ENCODE measurements at regions of chr6 and their contacts with region 1.

Region 1: DNA sequence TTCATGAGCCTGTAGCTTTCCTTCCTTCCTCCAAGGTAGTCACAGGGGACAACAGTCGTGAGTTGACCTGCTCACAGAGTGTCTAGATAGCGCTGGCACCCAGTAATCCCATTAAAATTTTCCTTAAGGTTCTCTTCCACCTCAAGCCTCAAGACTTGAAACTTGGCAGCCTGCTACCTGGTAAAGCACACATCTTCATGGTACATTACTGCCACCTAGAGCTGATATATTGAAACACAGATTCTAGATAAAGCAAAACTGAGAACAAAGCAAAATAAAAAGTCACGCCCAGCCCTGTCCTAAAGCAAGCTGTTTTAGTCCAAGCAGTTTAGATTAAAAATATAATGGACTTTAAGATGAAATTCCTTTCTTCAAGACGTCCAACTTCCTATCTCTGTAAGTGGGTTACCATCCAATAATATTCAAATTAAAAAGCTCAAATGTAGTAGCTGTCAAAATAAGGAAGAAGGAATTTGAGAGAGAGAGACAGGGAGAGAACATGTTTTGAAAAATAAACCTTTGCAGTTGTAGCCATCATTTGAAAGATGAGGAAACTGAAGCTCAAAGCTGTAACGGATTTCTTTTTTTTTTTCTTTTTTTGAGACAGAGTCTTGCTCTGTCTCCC is 50.7 kb upstream of the CD83 start:
- DNase-seq: peak; percentile 54 to 65
- ATAC-seq: peak; percentile 74 to 83
- H3K4me3 ChIP-seq: no peak overlapping the region
- H3K27ac ChIP-seq: no peak overlapping the region
- H3K4me1 ChIP-seq: no peaks in the 10 kb centered on the region
- CTCF ChIP-seq: peak; percentile 70
- EP300 ChIP-seq: no peak
- POLR2A ChIP-seq: no peak
- RAD21 ChIP-seq: peak; percentile 78 to 81

Region 2: DNA sequence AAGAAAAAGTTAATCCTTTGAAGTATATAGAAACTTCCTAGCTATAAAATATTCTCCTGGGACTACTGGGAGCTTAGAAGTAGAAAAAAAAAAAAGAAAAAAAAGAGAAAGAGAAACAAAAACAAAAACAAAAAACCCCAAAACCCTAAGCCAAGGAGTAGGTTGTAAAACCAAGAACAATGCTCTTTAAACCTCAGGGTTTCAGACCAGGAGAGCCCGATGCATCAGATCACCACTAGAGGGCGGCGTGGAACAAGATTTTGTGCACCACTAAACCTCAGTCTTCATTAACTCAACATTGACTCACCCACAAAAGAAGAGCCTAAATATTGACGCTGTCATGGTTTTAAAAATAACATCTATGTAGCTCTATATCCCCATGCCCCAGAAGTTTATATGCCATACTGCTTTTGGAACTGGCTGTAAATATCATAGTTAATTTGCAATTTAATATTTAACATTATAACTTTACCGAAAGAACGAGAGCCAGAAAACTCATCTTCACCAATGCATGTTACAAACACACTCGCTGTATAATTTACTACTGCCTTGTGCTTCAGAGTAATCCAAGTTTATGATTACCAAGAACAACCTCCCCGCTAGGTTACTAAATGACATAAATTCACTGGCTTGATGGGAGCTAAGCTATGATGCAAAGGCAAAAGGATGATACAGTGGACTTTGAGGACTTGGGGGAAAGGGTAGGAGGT is 271.7 kb before region 1 on chr6:
- CTCF ChIA-PET with region 1: interaction called, 13 read pairs
- POLR2A ChIA-PET with region 1: no interaction called
- DNase-seq: peak; percentile 23 to 72
- ATAC-seq: peak; percentile 88 to 90
- H3K4me3 ChIP-seq: no peak overlapping the region
- H3K27ac ChIP-seq: no peak overlapping the region
- H3K4me1 ChIP-seq: peaks cover 11% of the 10 kb centered on the region; the same call in 2 of the 3 replicates
- CTCF ChIP-seq: peak; percentile 78
- EP300 ChIP-seq: no peak
- POLR2A ChIP-seq: no peak
- RAD21 ChIP-seq: peak; percentile 69 to 74

Region 3: GRCh38 chr6:13903364-13903763 is 163.5 kb before region 1 on chr6:
- CTCF ChIA-PET with region 1: interaction called, 186 read pairs
- POLR2A ChIA-PET with region 1: interaction called, 4 read pairs
- DNase-seq: no peak
- ATAC-seq: no peak
- H3K4me3 ChIP-seq: no peak overlapping the region
- H3K27ac ChIP-seq: no peak overlapping the region
- H3K4me1 ChIP-seq: no peaks in the 10 kb centered on the region
- CTCF ChIP-seq: no peak
- EP300 ChIP-seq: no peak
- POLR2A ChIP-seq: no peak
- RAD21 ChIP-seq: no peak

Region 4: GRCh38 chr6:14046476-14047068 is 20.3 kb before region 1 on chr6:
- CTCF ChIA-PET with region 1: interaction called, 17 read pairs
- POLR2A ChIA-PET with region 1: no interaction called
- DNase-seq: peak; percentile 54 to 60
- ATAC-seq: peak; percentile 84 to 85; a peak in 5 of 6 replicates
- H3K4me3 ChIP-seq: no peak overlapping the region
- H3K27ac ChIP-seq: no peak overlapping the region
- H3K4me1 ChIP-seq: no peaks in the 10 kb centered on the region
- CTCF ChIP-seq: peak; percentile 54
- EP300 ChIP-seq: no peak
- POLR2A ChIP-seq: no peak
- RAD21 ChIP-seq: peak; percentile 56 to 58

Region 5: DNA sequence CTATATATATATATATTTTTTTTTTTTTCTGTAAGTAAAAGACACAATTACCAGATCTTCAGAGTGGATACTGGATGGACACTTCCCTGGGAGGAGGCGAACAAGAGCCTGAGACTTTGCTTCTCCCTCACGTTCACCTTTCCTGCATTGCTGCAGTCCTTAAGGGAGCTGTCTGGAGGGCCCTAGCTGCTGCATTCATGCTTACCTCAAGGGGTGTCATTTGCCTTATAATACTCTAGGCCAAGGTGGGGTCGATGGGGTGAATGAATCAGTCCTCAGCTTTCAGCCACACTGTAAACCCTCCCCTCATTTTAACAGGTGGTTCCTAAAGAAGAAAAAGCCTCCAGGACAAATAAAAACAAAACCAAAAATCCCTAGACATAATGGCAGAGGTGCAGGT is 15.9 kb after region 1 on chr6:
- CTCF ChIA-PET with region 1: interaction called, 10 read pairs
- POLR2A ChIA-PET with region 1: no interaction called
- DNase-seq: no peak
- ATAC-seq: no peak
- H3K4me3 ChIP-seq: no peak overlapping the region
- H3K27ac ChIP-seq: no peak overlapping the region
- H3K4me1 ChIP-seq: no peaks in the 10 kb centered on the region
- CTCF ChIP-seq: no peak
- EP300 ChIP-seq: no peak
- POLR2A ChIP-seq: no peak
- RAD21 ChIP-seq: no peak

Region 6: DNA sequence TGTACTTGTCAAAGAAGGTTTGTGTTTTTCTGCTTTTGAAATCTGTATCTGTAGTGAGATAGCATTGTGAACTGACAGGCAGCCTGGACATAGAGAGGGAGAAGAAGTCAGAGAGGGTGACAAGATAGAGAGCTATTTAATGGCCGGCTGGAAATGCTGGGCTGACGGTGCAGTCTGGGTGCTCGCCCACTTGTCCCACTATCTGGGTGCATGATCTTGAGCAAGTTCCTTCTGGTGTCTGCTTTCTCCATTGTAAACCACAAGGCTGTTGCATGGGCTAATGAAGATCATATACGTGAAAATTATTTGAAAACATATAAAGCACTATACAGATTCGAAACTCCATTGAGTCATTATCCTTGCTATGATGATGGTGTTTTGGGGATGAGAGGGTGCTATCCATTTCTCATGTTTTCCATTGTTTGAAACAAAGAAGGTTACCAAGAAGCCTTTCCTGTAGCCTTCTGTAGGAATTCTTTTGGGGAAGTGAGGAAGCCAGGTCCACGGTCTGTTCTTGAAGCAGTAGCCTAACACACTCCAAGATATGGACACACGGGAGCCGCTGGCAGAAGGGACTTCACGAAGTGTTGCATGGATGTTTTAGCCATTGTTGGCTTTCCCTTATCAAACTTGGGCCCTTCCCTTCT is 69.1 kb after region 1 on chr6:
- CTCF ChIA-PET with region 1: no interaction called
- POLR2A ChIA-PET with region 1: no interaction called
- DNase-seq: no peak
- ATAC-seq: no peak
- H3K4me3 ChIP-seq: no peak overlapping the region
- H3K27ac ChIP-seq: no peak overlapping the region
- H3K4me1 ChIP-seq: no peaks in the 10 kb centered on the region
- CTCF ChIP-seq: no peak
- EP300 ChIP-seq: no peak
- POLR2A ChIP-seq: no peak
- RAD21 ChIP-seq: no peak

Region 7: DNA sequence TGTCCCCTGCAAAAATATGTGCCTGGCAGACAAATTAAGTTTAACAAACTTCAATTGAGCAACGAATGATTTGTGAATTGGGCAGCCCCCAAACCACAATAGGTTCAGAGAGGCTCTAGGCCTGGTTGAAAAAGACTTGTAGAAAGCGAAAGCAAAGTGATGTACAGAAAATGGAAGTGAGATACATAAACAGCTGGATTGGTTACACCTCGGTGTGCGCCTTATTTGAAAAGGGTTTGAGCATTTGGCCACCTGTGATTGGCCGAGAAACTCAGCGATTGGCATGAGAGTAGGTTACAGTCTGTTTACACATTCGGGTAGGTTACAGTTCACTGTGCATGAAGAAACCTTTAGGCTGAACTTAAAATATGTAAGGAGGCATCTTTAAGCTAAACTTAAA is 187.6 kb after region 1 on chr6:
- CTCF ChIA-PET with region 1: no interaction called
- POLR2A ChIA-PET with region 1: no interaction called
- DNase-seq: no peak
- ATAC-seq: no peak
- H3K4me3 ChIP-seq: no peak overlapping the region
- H3K27ac ChIP-seq: no peak overlapping the region
- H3K4me1 ChIP-seq: no peaks in the 10 kb centered on the region
- CTCF ChIP-seq: no peak
- EP300 ChIP-seq: no peak
- POLR2A ChIP-seq: no peak
- RAD21 ChIP-seq: no peak

Measured in A549 (cell line).